Activated naive CD4-positive, alpha-beta T cell treated with anti-CD3 and anti-CD28 coated beads, Interleukin-2, amount 10 ng/mL, durations not matched to agents 7 days and 5 days (primary cell): ENCODE measurements at regions of chr2 and their contacts with region 1.

Region 1: DNA sequence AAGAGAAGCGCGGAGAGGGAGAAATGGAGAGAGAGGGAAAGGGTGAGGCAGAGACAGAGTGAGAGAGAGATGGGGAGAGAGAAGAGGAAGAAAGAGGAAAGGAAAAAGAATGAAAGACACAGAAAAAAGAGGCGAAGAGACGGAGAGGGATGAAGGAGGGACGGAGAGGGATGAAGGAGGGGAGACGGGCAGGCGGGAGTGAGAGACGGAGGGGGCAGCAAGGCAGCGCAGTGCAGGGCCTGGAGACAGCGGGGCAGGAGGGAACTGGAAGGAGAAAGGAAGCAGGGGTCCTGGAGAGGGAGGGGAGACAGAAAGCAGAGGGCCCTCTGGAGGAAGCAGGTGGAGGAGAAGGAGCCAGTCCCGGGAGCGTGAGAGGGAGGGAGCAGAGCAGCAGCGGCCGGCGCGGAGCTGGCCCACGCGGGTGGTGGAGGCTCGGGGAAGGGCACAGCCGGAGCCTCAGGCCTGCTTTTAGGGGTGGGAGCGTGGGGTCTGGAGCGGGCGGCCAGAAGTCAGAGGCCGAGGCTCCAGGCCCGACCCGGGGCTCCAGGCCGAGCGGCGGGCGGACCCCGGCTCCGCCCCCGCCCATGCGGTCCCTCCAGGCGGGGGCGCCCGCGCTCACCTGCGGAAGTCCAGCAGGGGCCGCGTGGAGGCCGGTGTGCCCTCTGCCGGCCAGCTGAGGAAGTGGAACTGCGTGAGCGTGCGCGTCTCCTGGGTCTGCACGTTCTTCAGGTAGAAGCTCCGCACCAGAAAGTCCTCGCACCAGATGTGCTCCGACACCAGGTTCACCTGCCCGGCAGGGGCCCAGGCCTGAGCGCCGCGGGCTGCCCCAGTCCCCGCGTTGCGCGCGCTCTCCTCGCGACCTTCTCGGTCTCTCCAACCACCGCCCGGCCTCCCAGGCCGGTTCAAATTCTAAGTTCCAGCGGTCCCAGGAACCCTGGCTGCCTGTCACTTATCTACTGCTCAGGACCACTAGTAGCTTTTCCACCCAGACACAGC is 14.5 kb downstream of the PTPRN start:
- DNase-seq: peak; percentile 90
- H3K4me3 Mint-ChIP-seq: peak overlapping the region; percentile 47
- H3K27ac Mint-ChIP-seq: no peak overlapping the region
- H3K4me1 Mint-ChIP-seq: peaks cover 36% of the 10 kb centered on the region
- H3K27me3 Mint-ChIP-seq: peaks cover 81% of the 10 kb centered on the region

Region 2: DNA sequence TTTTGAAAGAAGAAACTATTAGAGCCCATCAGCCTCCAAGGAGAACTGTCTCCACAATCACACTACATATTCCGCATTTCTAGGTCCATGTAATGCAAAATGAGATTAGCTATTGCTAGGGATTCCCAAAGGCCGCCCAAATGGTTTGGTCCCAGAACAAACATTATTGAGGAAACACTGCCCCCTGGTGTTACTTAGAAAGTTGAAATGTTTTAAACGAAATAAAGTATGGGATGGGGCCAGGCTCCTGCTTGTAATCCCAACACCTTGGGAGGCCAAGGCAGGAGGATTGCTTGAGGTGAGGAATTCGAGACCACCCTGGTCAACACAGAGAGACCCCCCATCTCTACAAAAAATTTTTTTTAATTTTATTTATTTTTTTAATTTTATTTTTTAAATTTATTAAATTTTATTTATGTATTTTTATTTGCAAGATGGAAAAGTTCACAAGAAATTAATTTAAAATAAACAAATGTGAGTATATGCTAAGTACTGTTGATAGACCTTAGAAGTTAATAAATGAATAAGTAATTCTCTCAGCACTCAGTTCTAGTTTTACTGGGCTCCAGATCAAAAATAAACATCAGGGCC is 139.5 kb before region 1 on chr2:
- CTCF ChIA-PET with region 1: interaction called, 70 read pairs
- DNase-seq: peak; percentile 41
- H3K4me3 Mint-ChIP-seq: no peak overlapping the region
- H3K27ac Mint-ChIP-seq: no peak overlapping the region
- H3K4me1 Mint-ChIP-seq: peaks cover 15% of the 10 kb centered on the region
- H3K27me3 Mint-ChIP-seq: no peaks in the 10 kb centered on the region

Region 3: GRCh38 chr2:219171231-219171651 is 123.4 kb before region 1 on chr2:
- CTCF ChIA-PET with region 1: interaction called, 33 read pairs
- DNase-seq: peak; percentile 36
- H3K4me3 Mint-ChIP-seq: no peak overlapping the region
- H3K27ac Mint-ChIP-seq: peak overlapping the region; percentile 77
- H3K4me1 Mint-ChIP-seq: peaks cover 30% of the 10 kb centered on the region
- H3K27me3 Mint-ChIP-seq: no peaks in the 10 kb centered on the region

Region 4: GRCh38 chr2:219229305-219230058 is 65.2 kb before region 1 on chr2 and contains the starts of genes ANKZF1 and ATG9A:
- CTCF ChIA-PET with region 1: interaction called, 12 read pairs
- DNase-seq: peak; percentile 100
- H3K4me3 Mint-ChIP-seq: peak within 1 kb of the TSS; percentile 95
- H3K27ac Mint-ChIP-seq: peak within 1 kb of the TSS; percentile 100
- H3K4me1 Mint-ChIP-seq: peaks cover 54% of the 10 kb centered on the region
- H3K27me3 Mint-ChIP-seq: no peaks in the 10 kb centered on the region

Region 5: DNA sequence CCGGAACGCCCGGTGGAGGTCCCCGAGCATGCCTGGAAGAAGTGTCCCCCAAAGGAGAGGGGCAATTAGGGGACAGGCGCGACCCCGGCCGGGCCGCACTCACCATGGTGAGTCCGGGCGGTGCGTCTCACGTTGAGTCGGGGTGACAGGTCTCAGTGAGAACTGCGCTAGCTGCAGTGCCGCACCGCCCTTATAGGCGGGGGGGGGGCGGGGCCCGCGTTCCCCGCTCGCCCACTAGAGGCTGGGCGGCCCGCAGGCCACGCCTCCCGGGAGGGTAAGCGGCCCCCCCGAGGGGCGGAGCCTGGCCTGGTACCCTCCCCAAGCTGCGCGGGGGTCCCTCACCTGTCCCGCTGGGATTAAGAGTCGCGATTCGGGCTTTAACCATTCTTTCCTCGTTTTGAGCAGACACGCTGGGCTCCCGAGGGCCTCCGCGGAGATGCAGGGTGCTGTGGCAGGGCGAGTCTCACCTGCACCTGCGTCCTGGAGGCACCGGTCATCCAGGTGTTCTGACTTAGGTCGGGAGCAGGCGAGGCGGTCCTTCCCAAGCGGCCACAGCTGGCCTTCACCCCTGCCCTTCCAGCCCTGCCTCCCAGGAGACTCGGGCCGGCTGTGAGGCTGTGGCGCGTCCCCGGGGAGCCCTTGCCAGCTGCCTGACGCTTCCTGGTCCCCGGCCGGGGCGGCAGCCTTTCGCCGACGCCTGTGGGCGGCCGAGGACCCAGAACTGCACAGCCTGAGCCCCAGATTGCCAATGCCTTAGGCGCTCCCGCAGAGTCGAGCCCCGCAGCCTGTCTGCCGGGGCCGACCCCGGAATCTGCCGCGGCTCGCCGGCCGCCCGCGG is 40.7 kb before region 1 on chr2 and contains the start of gene TUBA4A:
- CTCF ChIA-PET with region 1: interaction called, 49 read pairs
- DNase-seq: peak; percentile 93
- H3K4me3 Mint-ChIP-seq: peak within 1 kb of the TSS; percentile 92
- H3K27ac Mint-ChIP-seq: peak within 1 kb of the TSS; percentile 95
- H3K4me1 Mint-ChIP-seq: peaks cover 53% of the 10 kb centered on the region
- H3K27me3 Mint-ChIP-seq: peaks cover 8% of the 10 kb centered on the region

Region 6: DNA sequence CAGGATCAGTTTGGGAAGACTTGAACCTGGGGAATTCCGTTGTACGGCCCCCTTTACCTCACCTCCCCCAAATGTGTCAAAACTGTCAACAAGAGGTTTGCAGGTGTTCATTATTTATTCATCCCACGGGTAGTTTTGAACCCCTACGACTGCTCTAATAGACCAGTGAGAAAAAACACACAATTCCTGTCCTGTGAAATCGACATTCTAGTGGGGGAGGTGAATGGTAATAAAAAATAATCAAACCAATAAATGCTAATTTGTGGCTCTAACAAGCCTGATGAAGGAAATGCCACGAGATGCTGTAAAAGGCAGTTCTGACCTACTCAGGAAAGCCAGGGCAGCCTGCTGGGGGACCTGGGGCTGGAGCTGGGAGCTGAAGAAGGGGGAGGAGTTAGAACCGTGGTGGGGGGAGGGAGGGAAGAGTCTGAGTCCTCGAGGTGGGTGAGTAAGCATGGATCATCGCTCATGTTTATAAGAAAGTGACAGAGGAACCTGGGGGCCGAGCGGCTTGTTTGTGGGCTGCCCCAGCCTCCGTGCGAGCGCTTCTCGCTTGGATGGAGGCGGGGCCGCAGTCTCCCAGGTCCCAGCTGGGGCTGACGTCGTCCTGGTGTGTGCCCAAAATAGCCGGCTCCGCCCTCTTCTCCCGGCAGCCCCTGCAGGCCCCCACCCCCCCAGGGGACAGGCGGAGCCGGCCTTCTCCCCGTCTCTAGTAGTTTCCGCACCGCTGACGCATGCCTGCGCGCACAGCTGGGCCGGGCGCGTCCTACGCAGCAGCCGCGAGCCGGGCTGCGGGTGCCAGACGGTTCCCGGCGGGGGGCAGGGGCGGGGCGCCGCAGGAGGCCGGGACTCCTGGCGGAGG is 15.8 kb before region 1 on chr2 and contains the start of gene DNAJB2:
- CTCF ChIA-PET with region 1: interaction called, 267 read pairs
- DNase-seq: peak; percentile 99
- H3K4me3 Mint-ChIP-seq: peak within 1 kb of the TSS; percentile 92
- H3K27ac Mint-ChIP-seq: peak within 1 kb of the TSS; percentile 98
- H3K4me1 Mint-ChIP-seq: peaks cover 42% of the 10 kb centered on the region
- H3K27me3 Mint-ChIP-seq: peaks cover 14% of the 10 kb centered on the region

Region 7: DNA sequence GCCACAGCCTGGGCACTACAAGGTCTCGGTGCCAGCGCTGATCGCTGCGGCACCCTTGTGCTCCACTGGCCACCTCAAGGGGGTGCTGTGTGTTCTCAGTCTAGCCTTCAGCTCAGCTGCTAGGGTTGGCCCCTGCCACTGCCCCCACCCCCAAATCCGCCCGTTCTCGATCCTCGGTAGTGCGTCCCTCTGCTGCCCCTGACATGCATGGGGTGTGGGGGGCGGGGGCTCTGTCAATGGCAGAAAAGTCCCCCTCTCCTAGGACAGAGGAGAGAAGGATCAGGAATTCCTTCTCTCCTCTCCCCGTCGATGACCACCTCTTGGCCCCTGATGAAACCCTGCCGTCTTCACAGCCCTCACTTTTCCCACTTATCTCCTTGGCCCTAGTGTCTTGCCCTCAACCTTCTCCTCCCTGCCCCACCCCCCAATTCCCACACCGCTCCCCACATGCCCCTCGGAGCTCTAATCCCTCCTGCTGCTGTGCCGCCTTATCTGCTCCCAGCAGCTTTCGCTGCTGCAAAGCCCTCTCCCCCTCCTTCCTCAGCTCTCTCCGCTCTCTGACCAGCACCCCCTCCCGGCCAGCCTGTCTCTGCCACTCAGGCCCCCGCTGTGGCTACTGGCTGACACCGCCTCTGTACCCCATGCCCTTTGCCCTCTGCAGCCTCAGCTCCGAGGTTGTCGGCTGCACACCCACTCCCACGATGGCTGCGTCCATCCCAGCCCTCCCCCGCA is 215.3 kb after region 1 on chr2:
- CTCF ChIA-PET with region 1: no interaction called
- DNase-seq: peak; percentile 68
- H3K4me3 Mint-ChIP-seq: no peak overlapping the region
- H3K27ac Mint-ChIP-seq: no peak overlapping the region
- H3K4me1 Mint-ChIP-seq: peaks cover 13% of the 10 kb centered on the region
- H3K27me3 Mint-ChIP-seq: peaks cover 74% of the 10 kb centered on the region

Region 8: DNA sequence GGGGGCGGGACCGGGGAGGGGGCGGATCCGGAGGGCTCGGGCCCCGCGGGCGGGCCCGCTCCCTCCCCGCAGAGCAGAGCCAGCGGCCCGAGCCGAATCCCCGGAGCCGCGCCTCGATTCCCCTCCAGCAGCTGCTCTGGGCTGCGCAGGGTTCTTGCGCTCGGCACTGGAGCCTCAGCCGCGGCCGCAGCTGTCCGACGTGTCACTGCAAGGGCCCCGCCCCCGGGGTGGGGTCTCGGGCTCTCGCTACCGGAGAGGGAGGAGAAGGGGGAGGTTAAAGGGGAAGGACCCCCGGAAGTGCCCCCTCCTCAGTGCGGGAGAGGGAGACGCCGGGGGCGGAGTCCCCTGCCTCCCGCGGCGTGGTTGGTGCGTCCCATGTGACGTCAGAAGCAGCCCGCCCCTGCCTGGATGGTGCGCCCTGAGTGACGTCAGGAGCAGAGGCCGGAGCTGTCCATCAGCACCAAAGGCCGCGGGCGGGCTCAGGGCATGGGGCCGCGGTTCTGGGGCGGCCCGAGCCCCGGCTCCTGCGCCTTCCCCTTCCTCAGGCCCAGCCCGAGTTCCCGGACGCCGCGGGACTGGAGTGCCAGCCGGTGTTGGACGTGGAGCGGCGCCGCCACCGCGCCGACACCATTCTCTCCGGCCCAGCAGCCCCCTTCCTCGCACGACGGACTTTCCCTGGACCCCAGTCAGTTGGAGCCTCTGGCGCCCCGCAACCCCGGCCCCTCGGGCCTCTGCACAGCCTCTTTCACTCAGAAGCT is 249.1 kb after region 1 on chr2 and contains the starts of genes CHPF and TMEM198:
- CTCF ChIA-PET with region 1: no interaction called
- DNase-seq: peak; percentile 97
- H3K4me3 Mint-ChIP-seq: peak within 1 kb of the TSS; percentile 77
- H3K27ac Mint-ChIP-seq: peak within 1 kb of the TSS; percentile 86
- H3K4me1 Mint-ChIP-seq: peaks cover 23% of the 10 kb centered on the region
- H3K27me3 Mint-ChIP-seq: peaks cover 36% of the 10 kb centered on the region